ENCODE measurements at regions of chr6 and their contacts with region 1.

Region 1: DNA sequence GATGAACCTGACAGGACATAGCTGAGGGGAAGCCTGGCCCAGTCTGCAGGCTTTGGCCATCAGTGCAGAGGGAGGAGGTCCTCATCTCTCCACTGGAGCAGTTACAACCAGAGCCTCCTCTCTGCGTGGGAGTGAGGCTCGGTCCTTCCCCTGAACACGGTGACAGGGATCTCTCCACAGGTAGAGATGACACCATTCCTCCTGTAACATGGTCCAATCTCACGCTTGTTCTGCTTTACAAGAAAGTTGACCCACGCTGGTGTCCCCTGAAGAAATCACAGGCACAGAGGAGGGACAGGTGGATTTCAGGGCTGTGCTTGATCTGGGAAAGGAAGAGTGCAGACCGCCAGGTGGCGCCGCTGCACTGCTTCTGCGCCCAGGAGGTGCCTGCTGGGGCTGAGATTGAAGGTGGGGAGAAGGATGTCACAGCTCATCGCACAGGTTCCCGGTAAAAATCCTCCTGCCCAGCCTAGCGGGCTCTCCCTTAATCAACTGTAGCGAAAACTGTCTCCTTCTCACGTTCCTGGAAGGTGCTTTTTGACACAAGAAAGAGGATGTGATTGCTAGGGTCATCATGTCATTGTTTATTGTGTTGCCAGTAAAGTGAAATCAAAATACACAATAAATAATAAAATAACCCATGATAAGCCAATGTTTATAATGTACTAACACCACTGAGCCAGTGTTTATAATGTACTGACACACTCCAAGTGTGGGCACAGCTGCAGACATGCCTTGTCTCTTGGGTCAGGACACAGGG is 20.4 kb downstream of the HLA-G start:
- DNase-seq: peak; percentile 71 to 88 (median 79)
- H3K4me3 ChIP-seq: no peak overlapping the region
- H3K4me3 Mint-ChIP-seq: peak overlapping the region in 5 of 7 donors; percentile 15 to 45 (median 37)
- H3K27ac ChIP-seq: no peak overlapping the region
- H3K27ac Mint-ChIP-seq: peak overlapping the region in 1 of 8 donors; percentile 40
- H3K4me1 ChIP-seq: no peaks in the 10 kb centered on the region
- H3K4me1 Mint-ChIP-seq: peaks cover 10 to 18% (median 13%) of the 10 kb centered on the region in 3 donors
- H3K27me3 ChIP-seq: peaks cover 33% of the 10 kb centered on the region
- H3K27me3 Mint-ChIP-seq: peaks cover 52 to 72% of the 10 kb centered on the region in 2 donors

Region 2: DNA sequence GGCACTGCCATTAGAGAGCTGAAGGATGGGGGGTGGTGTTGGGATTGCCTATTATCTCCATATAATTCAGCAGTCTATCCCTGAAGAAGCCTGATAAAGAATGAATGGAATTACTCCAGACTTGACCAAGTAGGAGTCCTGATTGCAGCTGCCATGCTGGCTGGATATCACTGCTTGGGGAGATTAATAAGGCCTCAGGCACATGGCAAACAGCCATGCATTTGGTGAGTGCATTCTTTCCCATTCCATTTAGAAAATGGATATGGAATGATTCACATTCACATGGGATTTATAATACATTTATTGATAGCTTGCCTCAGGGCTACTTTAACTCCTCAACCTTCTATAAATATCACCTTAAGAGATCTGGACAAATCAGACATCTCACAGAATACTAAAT is 44.6 kb after region 1 on chr6:
- CTCF ChIA-PET with region 1: no interaction called
- POLR2A ChIA-PET with region 1: no interaction called
- DNase-seq: no peak
- H3K4me3 ChIP-seq: no peak overlapping the region
- H3K4me3 Mint-ChIP-seq: peak overlapping the region in 1 of 7 donors; percentile 53
- H3K27ac ChIP-seq: no peak overlapping the region
- H3K27ac Mint-ChIP-seq: peak overlapping the region in 1 of 8 donors; percentile 59
- H3K4me1 ChIP-seq: no peaks in the 10 kb centered on the region
- H3K4me1 Mint-ChIP-seq: peaks cover 3 to 19% (median 4%) of the 10 kb centered on the region in 3 donors
- H3K27me3 ChIP-seq: no peaks in the 10 kb centered on the region
- H3K27me3 Mint-ChIP-seq: no peaks in the 10 kb centered on the region

Region 3: GRCh38 chr6:29976588-29977424 is 128.8 kb after region 1 on chr6:
- CTCF ChIA-PET with region 1: interaction called, 13 read pairs
- POLR2A ChIA-PET with region 1: no interaction called
- DNase-seq: peak; percentile 18 to 73 (median 40)
- H3K4me3 ChIP-seq: peak overlapping the region; percentile 58
- H3K4me3 Mint-ChIP-seq: peak overlapping the region; percentile 60 to 96 (median 88)
- H3K27ac ChIP-seq: peak overlapping the region; percentile 47
- H3K27ac Mint-ChIP-seq: peak overlapping the region in 5 of 8 donors; percentile 35 to 88 (median 71)
- H3K4me1 ChIP-seq: peaks cover 28% of the 10 kb centered on the region
- H3K4me1 Mint-ChIP-seq: peaks cover 38 to 41% (median 39%) of the 10 kb centered on the region in 3 donors
- H3K27me3 ChIP-seq: peaks cover 11% of the 10 kb centered on the region
- H3K27me3 Mint-ChIP-seq: peaks cover 50 to 56% of the 10 kb centered on the region in 2 donors

Region 4: GRCh38 chr6:30013291-30013922 is 165.4 kb after region 1 on chr6:
- CTCF ChIA-PET with region 1: interaction called, 40 read pairs
- POLR2A ChIA-PET with region 1: no interaction called
- DNase-seq: peak in 3 of 5 donors; percentile 12 to 44 (median 32)
- H3K4me3 ChIP-seq: no peak overlapping the region
- H3K4me3 Mint-ChIP-seq: no peak overlapping the region
- H3K27ac ChIP-seq: no peak overlapping the region
- H3K27ac Mint-ChIP-seq: no peak overlapping the region
- H3K4me1 ChIP-seq: no peaks in the 10 kb centered on the region
- H3K4me1 Mint-ChIP-seq: peaks cover 0 to 2% (median 0%) of the 10 kb centered on the region in 3 donors
- H3K27me3 ChIP-seq: peaks cover 3% of the 10 kb centered on the region
- H3K27me3 Mint-ChIP-seq: peaks cover 15 to 39% of the 10 kb centered on the region in 2 donors

Region 5: GRCh38 chr6:30047220-30047619 is 199.2 kb after region 1 on chr6:
- CTCF ChIA-PET with region 1: no interaction called
- POLR2A ChIA-PET with region 1: no interaction called
- DNase-seq: no peak
- H3K4me3 ChIP-seq: no peak overlapping the region
- H3K4me3 Mint-ChIP-seq: no peak overlapping the region
- H3K27ac ChIP-seq: no peak overlapping the region
- H3K27ac Mint-ChIP-seq: no peak overlapping the region
- H3K4me1 ChIP-seq: no peaks in the 10 kb centered on the region
- H3K4me1 Mint-ChIP-seq: peaks cover 0 to 9% (median 8%) of the 10 kb centered on the region in 3 donors
- H3K27me3 ChIP-seq: no peaks in the 10 kb centered on the region
- H3K27me3 Mint-ChIP-seq: no peaks in the 10 kb centered on the region